ENCODE measurements at regions of chr12 and their contacts with region 1.

Region 1: DNA sequence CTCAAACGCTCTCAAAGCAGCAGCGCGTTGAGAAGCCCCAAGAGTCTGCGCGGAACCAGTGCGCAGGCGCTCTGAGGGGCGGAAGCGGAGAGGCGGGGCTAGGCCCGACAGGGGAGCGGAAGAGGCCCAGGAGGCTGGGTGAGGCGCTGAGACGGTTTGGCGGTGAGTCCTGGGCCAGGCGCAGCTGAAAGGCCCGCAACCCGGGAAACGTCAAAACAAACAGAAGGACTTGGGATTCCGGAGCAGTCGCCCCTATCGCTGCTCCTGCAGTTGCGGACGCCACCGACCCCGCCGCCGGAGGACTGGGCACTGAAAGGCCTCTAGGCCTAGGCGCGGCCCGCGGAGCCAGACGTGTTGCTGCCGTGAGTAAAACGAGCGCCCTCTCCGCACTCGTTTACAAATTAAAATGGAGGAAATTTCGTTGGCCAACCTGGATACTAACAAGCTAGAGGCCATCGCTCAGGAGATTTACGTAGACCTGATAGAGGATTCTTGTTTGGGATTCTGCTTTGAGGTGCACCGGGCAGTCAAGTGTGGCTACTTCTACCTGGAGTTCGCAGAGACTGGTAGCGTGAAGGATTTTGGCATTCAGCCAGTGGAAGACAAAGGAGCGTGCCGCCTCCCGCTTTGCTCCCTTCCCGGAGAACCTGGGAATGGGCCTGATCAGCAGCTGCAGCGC is at the start of gene ATXN7L3B:
- DNase-seq: peak; percentile 92 to 98 (median 95)
- ATAC-seq: peak; percentile 95 to 98 (median 96)
- H3K4me3 ChIP-seq: peak within 1 kb of the TSS; percentile 88 to 98
- H3K4me3 Mint-ChIP-seq: peak within 1 kb of the TSS; percentile 93 to 97 (median 97)
- H3K27ac ChIP-seq: peak within 1 kb of the TSS; percentile 95
- H3K27ac Mint-ChIP-seq: peak within 1 kb of the TSS; percentile 95 to 99
- H3K4me1 ChIP-seq: peaks cover 32 to 35% of the 10 kb centered on the region in 2 experiments
- H3K4me1 Mint-ChIP-seq: peaks cover 51 to 60% (median 57%) of the 10 kb centered on the region in 3 donors
- H3K27me3 ChIP-seq: no peaks in the 10 kb centered on the region
- H3K27me3 Mint-ChIP-seq: no peaks in the 10 kb centered on the region
- total RNA-seq, gene ATXN7L3B: 35.1 to 46.8 (median 40.3) TPM

Region 2: GRCh38 chr12:74552201-74552600 is 14.4 kb after region 1 on chr12:
- CTCF ChIA-PET with region 1: no interaction called
- POLR2A ChIA-PET with region 1: interaction called, 3 to 11 read pairs
- DNase-seq: no peak
- ATAC-seq: no peak
- H3K4me3 ChIP-seq: no peak overlapping the region
- H3K4me3 Mint-ChIP-seq: no peak overlapping the region
- H3K27ac ChIP-seq: no peak overlapping the region
- H3K27ac Mint-ChIP-seq: no peak overlapping the region
- H3K4me1 ChIP-seq: no peaks in the 10 kb centered on the region
- H3K4me1 Mint-ChIP-seq: no peaks in the 10 kb centered on the region
- H3K27me3 ChIP-seq: no peaks in the 10 kb centered on the region
- H3K27me3 Mint-ChIP-seq: no peaks in the 10 kb centered on the region

Region 3: GRCh38 chr12:75270157-75270556 is 732.3 kb after region 1 on chr12:
- CTCF ChIA-PET with region 1: no interaction called
- POLR2A ChIA-PET with region 1: no interaction called
- DNase-seq: no peak
- ATAC-seq: no peak
- H3K4me3 ChIP-seq: no peak overlapping the region
- H3K4me3 Mint-ChIP-seq: no peak overlapping the region
- H3K27ac ChIP-seq: no peak overlapping the region
- H3K27ac Mint-ChIP-seq: no peak overlapping the region
- H3K4me1 ChIP-seq: no peaks in the 10 kb centered on the region
- H3K4me1 Mint-ChIP-seq: no peaks in the 10 kb centered on the region
- H3K27me3 ChIP-seq: no peaks in the 10 kb centered on the region
- H3K27me3 Mint-ChIP-seq: peaks cover 0 to 5% of the 10 kb centered on the region in 2 donors

Region 4: GRCh38 chr12:76495556-76495955 is 1957.7 kb after region 1 on chr12:
- CTCF ChIA-PET with region 1: interaction called in 1 of 2 experiments, 13 read pairs
- POLR2A ChIA-PET with region 1: no interaction called
- DNase-seq: no peak
- ATAC-seq: no peak
- H3K4me3 ChIP-seq: no peak overlapping the region
- H3K4me3 Mint-ChIP-seq: no peak overlapping the region
- H3K27ac ChIP-seq: no peak overlapping the region
- H3K27ac Mint-ChIP-seq: no peak overlapping the region
- H3K4me1 ChIP-seq: peaks cover 0 to 4% of the 10 kb centered on the region in 2 experiments
- H3K4me1 Mint-ChIP-seq: peaks cover 19 to 26% (median 23%) of the 10 kb centered on the region in 3 donors
- H3K27me3 ChIP-seq: no peaks in the 10 kb centered on the region
- H3K27me3 Mint-ChIP-seq: no peaks in the 10 kb centered on the region